ENCODE measurements at regions of chr4 and their contacts with region 1.

Region 1: GRCh38 chr4:77372375-77372774 is 215.4 kb downstream of the CCNG2 start:
- DNase-seq: no peak
- H3K4me3 ChIP-seq: no peak overlapping the region
- H3K27ac ChIP-seq: no peak overlapping the region
- H3K4me1 ChIP-seq: no peaks in the 10 kb centered on the region
- H3K27me3 ChIP-seq: peaks cover 43% of the 10 kb centered on the region; the same call in 1 of the 2 replicates
- CTCF ChIP-seq: no peak
- EP300 ChIP-seq: no peak
- RAD21 ChIP-seq: no peak

Region 2: GRCh38 chr4:76748649-76749048 is 623.7 kb before region 1 on chr4:
- CTCF ChIA-PET with region 1: no interaction called
- POLR2A ChIA-PET with region 1: no interaction called
- DNase-seq: peak; percentile 56
- H3K4me3 ChIP-seq: no peak overlapping the region
- H3K27ac ChIP-seq: peak overlapping the region; percentile 42 to 76; a peak in 1 of 4 replicates
- H3K4me1 ChIP-seq: peaks cover 20 to 47% of the 10 kb centered on the region in 2 experiments
- H3K27me3 ChIP-seq: no peaks in the 10 kb centered on the region
- CTCF ChIP-seq: peak; percentile 62
- EP300 ChIP-seq: no peak
- RAD21 ChIP-seq: peak; percentile 87

Region 3: DNA sequence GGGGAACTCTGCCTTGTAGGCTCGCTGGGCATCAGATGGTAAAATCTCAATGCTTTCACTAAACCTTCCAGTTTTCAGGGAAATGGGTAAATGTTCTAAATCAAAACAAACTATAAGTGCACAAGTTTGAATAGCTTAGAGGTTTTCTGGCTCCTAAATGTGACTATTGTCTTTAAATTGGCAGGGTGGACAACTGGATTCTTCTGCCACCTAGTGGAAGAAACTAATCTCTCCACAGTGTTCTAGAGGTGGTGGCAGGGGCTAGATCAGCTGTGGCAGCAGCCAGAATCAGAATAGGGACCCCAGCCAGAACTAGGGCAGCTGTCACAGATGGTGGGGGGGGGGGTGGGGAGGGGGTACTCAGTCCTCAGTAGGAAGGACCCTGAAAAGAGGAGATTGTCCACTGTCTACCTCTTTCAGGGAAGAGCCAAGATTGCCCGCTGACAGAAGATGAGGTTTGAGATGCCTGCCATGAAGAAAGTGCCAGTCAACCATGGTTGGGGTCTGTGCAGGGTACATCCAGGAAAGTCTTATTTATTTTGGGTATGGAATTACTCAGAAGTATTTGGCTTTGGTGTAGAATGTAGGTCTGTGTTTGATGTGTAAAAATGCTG is 14.0 kb before region 1 on chr4:
- CTCF ChIA-PET with region 1: interaction called, 12 read pairs
- POLR2A ChIA-PET with region 1: no interaction called
- DNase-seq: peak; percentile 42
- H3K4me3 ChIP-seq: no peak overlapping the region
- H3K27ac ChIP-seq: no peak overlapping the region
- H3K4me1 ChIP-seq: no peaks in the 10 kb centered on the region
- H3K27me3 ChIP-seq: peaks cover 13% of the 10 kb centered on the region; the same call in 1 of the 2 replicates
- CTCF ChIP-seq: peak; percentile 67
- EP300 ChIP-seq: no peak
- RAD21 ChIP-seq: peak; percentile 62

Region 4: DNA sequence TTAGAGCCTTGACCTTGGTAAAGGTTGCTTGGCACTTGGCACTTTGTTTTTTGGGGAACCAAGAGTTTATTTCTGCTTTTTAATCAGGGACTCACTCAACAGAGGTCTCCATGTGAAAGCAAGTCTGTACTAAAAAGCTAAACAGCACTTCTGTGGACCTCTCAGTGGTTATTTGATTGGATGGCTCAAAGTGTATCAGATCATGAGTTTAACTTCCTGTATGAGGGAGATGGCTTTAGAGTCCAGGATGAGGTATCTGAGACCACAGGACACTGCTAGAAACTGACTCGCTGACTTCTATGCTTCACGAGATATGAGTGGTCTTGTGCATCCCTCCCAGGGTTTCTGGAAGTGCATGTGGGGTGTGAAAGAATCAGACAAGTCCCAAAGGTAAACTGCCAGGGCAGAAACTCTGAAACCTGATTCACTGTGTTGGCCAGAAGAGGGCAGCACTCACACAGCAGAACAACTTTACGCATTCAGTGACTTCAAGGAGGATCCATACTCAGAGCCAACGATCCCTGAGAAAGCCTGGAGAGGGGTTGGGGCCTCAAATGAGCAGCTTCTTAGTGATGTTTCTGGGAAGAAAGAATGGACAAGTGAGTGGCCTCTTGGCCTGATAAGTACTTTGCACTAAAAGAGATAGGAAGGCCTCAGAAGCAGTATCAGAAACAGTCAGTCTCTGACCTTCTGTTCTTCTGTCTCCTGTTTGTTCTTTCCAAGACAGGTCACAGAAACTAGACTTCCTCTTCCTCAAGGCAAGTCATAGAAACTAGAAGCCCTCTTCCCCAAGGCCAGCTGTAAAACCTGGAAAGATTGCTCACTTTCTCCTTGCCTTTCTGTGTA is 13.0 kb after region 1 on chr4:
- CTCF ChIA-PET with region 1: interaction called, 15 read pairs
- POLR2A ChIA-PET with region 1: no interaction called
- DNase-seq: peak; percentile 22
- H3K4me3 ChIP-seq: no peak overlapping the region
- H3K27ac ChIP-seq: no peak overlapping the region
- H3K4me1 ChIP-seq: no peaks in the 10 kb centered on the region
- H3K27me3 ChIP-seq: 0 out of 2 replicates have a peak, but pooled peaks cover 9% of the 10 kb centered on the region
- CTCF ChIP-seq: peak; percentile 83
- EP300 ChIP-seq: no peak
- RAD21 ChIP-seq: peak; percentile 81

Measured in SK-N-SH (cell line).